Activated B cell treated with CpG ODN at 0.5 μM for 24 hours (primary cell): ENCODE measurements at regions of chr15 and their contacts with region 1.

Region 1: DNA sequence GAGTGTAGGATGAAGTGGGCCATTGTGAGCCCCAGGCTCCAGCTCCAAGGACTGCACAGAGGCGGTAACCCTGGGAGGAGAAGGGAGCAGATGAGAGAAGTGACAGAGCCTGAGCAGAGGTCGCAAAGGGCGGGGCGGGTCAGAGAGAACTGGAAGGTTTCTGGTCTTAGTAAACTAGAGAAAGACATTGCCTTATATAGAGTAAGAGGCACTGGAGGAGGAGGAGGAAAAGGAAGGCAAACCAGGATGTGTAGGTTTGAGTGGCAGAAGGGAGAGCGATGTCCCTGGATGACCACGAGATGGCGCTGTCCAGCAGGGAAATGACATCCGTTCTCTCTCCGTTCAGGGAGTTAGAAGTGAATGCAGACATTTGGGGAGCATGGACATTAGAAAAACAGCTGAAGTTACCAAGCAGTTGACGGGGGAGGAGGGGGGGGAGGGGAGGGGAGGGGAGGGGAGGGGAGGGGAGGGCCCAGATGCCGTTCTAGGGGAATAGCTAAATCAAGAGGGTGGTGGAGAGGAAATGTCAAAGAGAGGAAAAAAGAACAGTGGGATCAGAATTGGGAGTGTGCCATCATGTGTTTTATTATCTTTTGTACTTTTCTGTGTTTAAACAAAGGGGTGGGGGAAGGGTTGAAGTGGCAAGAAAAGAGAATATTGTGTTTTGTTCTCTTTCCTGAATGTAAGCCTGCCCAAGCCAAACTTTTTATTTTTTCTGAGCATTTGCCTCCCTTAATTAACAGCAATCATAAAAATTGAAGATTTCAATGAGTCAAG is 48.8 kb downstream of the STARD5 start:
- DNase-seq: peak; percentile 60
- ATAC-seq: peak; percentile 89
- H3K4me3 Mint-ChIP-seq: no peak overlapping the region
- H3K27ac Mint-ChIP-seq: peak overlapping the region; percentile 46
- H3K4me1 Mint-ChIP-seq: peaks cover 19% of the 10 kb centered on the region
- H3K27me3 Mint-ChIP-seq: no peaks in the 10 kb centered on the region
- CTCF ChIP-seq: peak; percentile 74

Region 2: GRCh38 chr15:81133782-81134461 is 141.2 kb before region 1 on chr15 and contains the start of gene CFAP161:
- CTCF ChIA-PET with region 1: no interaction called
- POLR2A ChIA-PET with region 1: no interaction called
- intact Hi-C with region 1: no loop called
- DNase-seq: no peak
- ATAC-seq: peak; percentile 54
- H3K4me3 Mint-ChIP-seq: peak within 1 kb of the TSS; percentile 46
- H3K27ac Mint-ChIP-seq: no peak within 1 kb of the TSS
- H3K4me1 Mint-ChIP-seq: peaks cover 9% of the 10 kb centered on the region
- H3K27me3 Mint-ChIP-seq: peaks cover 37% of the 10 kb centered on the region
- CTCF ChIP-seq: no peak
- total RNA-seq, gene CFAP161: 0.18 TPM in 1 of 2 replicates, not detected in the other

Region 3: DNA sequence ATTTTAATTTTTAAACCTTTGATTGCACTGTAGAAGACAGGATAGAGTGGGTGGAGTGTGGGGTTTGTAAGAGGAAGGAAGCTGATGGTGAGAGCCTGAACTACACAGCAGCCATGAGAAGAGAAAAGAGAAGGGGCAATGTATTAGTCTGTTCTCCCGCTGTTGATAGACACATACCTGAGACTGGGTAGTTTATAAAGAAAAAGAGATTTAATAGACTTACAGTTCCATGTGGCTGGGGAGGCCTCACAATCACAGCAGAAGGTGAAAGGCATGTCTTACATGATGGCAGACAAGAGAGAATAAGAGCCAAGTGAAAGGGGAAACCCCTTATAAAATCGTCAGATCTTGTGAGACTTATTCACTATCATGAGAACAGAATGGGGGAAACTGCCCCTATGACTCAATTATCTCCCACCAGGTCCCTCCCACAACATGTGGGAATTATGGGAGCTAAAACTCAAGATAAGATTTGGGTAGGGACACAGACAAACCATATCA is 11.6 kb after region 1 on chr15:
- CTCF ChIA-PET with region 1: interaction called, 82 read pairs
- POLR2A ChIA-PET with region 1: interaction called, 61 read pairs
- intact Hi-C with region 1: loop called (anchors 1 kb)
- DNase-seq: no peak
- ATAC-seq: peak; percentile 80
- H3K4me3 Mint-ChIP-seq: peak overlapping the region; percentile 80
- H3K27ac Mint-ChIP-seq: peak overlapping the region; percentile 96
- H3K4me1 Mint-ChIP-seq: peaks cover 76% of the 10 kb centered on the region
- H3K27me3 Mint-ChIP-seq: no peaks in the 10 kb centered on the region
- CTCF ChIP-seq: no peak

Region 4: GRCh38 chr15:81301815-81302399 is 26.8 kb after region 1 on chr15:
- CTCF ChIA-PET with region 1: interaction called, 51 read pairs
- POLR2A ChIA-PET with region 1: interaction called, 28 read pairs
- intact Hi-C with region 1: loop called (anchors 1 kb)
- DNase-seq: peak; percentile 56
- ATAC-seq: peak; percentile 74
- H3K4me3 Mint-ChIP-seq: peak overlapping the region; percentile 99
- H3K27ac Mint-ChIP-seq: peak overlapping the region; percentile 99
- H3K4me1 Mint-ChIP-seq: peaks cover 96% of the 10 kb centered on the region
- H3K27me3 Mint-ChIP-seq: no peaks in the 10 kb centered on the region
- CTCF ChIP-seq: no peak

Region 5: DNA sequence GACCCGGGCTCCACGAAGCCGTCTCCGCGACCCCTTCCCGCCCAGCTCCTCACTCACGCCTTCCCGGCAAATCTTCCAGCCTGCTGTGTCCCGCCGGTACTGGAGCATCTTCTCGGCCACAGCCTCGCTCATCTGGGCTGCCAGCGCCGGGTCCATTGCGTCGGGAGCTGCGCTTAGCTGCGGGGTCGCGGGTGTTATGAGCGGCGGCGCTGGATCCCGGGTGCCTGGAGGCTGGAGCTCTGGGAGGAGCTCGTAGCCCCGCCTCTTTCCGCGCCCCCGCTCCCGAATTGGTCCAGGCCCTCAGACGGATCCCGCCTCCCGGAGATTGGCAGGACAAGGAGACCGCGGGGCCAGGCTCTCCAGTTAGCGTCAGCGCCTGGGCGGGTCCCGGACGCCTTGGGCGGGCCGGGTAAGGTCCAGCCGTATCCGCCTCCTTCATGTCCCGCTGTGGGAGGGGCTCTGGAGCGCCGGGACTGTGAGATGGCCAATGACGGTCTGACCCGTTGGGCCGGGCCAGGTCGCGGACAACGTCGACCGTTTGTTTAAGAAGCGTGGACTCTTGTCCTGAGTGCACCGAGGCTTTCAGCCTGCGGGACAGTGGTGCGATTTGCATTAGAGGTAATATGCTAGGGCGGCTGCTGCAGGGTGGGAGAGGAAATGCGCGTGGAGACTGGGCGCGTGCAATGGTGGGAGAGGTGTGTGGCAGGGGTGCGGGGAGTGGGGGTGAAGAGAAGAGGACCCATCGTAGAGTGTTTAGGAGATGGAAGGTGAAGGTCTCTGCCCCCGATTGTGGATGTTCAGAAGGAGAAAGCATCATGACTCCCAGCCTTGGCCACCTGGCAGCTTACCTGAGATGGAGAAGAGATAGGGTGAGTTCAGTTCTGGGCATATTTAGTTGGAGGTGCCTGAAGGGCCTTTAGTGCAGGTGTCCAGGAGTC is 49.1 kb after region 1 on chr15 and contains the start of gene STARD5:
- CTCF ChIA-PET with region 1: interaction called, 6 read pairs
- POLR2A ChIA-PET with region 1: interaction called, 12 read pairs
- intact Hi-C with region 1: no loop called
- DNase-seq: peak; percentile 89
- ATAC-seq: peak; percentile 99
- H3K4me3 Mint-ChIP-seq: peak within 1 kb of the TSS; percentile 97
- H3K27ac Mint-ChIP-seq: peak within 1 kb of the TSS; percentile 80
- H3K4me1 Mint-ChIP-seq: peaks cover 35% of the 10 kb centered on the region
- H3K27me3 Mint-ChIP-seq: no peaks in the 10 kb centered on the region
- CTCF ChIP-seq: no peak
- total RNA-seq, gene STARD5: 10.5 and 14.3 TPM in 2 replicates

Region 6: GRCh38 chr15:81400640-81401236 is 125.6 kb after region 1 on chr15:
- CTCF ChIA-PET with region 1: interaction called, 76 read pairs
- POLR2A ChIA-PET with region 1: interaction called, 3 read pairs
- intact Hi-C with region 1: loop called (anchors 1 kb)
- DNase-seq: no peak
- ATAC-seq: peak; percentile 58
- H3K4me3 Mint-ChIP-seq: no peak overlapping the region
- H3K27ac Mint-ChIP-seq: no peak overlapping the region
- H3K4me1 Mint-ChIP-seq: no peaks in the 10 kb centered on the region
- H3K27me3 Mint-ChIP-seq: no peaks in the 10 kb centered on the region
- CTCF ChIP-seq: peak; percentile 31

Region 7: DNA sequence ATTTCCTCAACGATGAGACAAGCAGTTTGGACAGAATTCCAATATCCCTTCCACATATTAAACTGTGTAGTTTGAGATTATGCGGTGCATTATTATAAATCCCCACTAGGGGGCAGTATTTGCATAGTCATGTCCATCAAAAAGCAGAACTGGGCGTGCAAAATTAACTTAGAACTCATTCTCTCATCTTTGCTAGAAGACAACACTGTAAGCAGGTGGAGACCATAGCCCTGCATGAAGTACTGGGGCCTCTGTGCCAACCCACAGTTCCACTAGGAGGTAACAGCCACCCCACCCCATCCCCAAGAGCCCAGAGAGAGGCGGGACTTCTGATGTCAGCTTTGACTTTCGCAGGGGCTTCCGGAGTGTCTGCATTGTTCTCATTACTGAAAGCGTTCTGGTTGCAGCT is 205.5 kb after region 1 on chr15:
- CTCF ChIA-PET with region 1: interaction called, 3 read pairs
- POLR2A ChIA-PET with region 1: no interaction called
- intact Hi-C with region 1: loop called (anchors 1 kb)
- DNase-seq: peak; percentile 20
- ATAC-seq: peak; percentile 61
- H3K4me3 Mint-ChIP-seq: no peak overlapping the region
- H3K27ac Mint-ChIP-seq: no peak overlapping the region
- H3K4me1 Mint-ChIP-seq: peaks cover 2% of the 10 kb centered on the region
- H3K27me3 Mint-ChIP-seq: peaks cover 2% of the 10 kb centered on the region
- CTCF ChIP-seq: peak; percentile 85